ENCODE measurements at regions of chr11 and their contacts with region 1.

Region 1: GRCh38 chr11:85595285-85595884 is 31.8 kb downstream of the DLG2 start:
- DNase-seq: peak in 7 of 9 donors; percentile 19 to 65 (median 49)
- ATAC-seq: peak; percentile 73
- H3K4me3 ChIP-seq: no peak overlapping the region
- H3K4me3 Mint-ChIP-seq: no peak overlapping the region
- H3K27ac ChIP-seq: no peak overlapping the region
- H3K27ac Mint-ChIP-seq: no peak overlapping the region
- H3K4me1 ChIP-seq: no peaks in the 10 kb centered on the region
- H3K4me1 Mint-ChIP-seq: no peaks in the 10 kb centered on the region
- H3K27me3 ChIP-seq: no peaks in the 10 kb centered on the region
- H3K27me3 Mint-ChIP-seq: peaks cover 0 to 19% (median 0%) of the 10 kb centered on the region in 5 donors

Region 2: DNA sequence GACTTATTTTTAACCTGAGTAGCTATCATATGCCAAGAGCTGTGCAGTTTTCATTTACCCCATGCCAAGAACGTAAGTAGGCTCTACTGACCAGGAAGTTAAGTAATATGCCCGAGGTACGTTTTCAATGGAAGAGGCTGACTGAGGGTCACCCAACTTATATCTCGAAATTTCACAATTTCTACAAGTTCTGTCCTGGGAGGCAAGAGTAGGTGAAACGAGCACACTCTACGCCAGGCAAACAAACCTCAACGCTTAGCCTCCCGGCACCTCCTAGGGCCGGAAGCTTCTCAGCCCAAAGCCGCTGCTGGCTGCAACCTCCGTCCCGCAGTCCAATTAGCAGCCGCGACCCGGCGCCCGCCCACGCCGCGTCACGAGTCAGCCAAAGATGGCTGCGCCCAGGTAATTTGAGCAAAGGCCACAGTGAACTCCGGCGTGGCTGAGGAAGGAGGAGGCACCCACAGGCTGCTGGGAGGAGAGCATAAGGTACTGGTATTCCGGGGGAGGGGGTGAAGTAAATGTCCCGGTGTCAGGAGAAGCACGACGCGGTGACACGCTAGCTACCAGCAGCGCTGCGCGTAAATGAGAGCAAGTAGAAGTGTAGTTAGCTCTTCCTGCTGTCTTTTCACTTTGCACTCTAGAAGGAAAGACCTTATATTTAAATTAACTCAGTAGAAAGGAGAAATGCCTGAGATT is 52.4 kb after region 1 on chr11 and contains the start of gene TMEM126A:
- CTCF ChIA-PET with region 1: no interaction called
- POLR2A ChIA-PET with region 1: no interaction called
- intact Hi-C with region 1: loop called in 1 of 2 experiments (anchors 1 kb)
- DNase-seq: peak; percentile 85 to 92 (median 90)
- ATAC-seq: peak; percentile 99
- H3K4me3 ChIP-seq: peak within 1 kb of the TSS; percentile 83
- H3K4me3 Mint-ChIP-seq: peak within 1 kb of the TSS; percentile 92 to 100 (median 98)
- H3K27ac ChIP-seq: peak within 1 kb of the TSS; percentile 87
- H3K27ac Mint-ChIP-seq: peak within 1 kb of the TSS; percentile 86 to 99 (median 98)
- H3K4me1 ChIP-seq: peaks cover 11 to 14% of the 10 kb centered on the region in 2 donors
- H3K4me1 Mint-ChIP-seq: peaks cover 9 to 48% (median 38%) of the 10 kb centered on the region in 7 donors
- H3K27me3 ChIP-seq: no peaks in the 10 kb centered on the region
- H3K27me3 Mint-ChIP-seq: peaks cover 12 to 29% (median 22%) of the 10 kb centered on the region in 5 donors
- total RNA-seq, gene TMEM126A: 17.8 to 40.8 (median 18.9) TPM

Region 3: GRCh38 chr11:85718991-85719807 is 123.8 kb after region 1 on chr11:
- CTCF ChIA-PET with region 1: no interaction called
- POLR2A ChIA-PET with region 1: no interaction called
- intact Hi-C with region 1: no loop called
- DNase-seq: no peak
- ATAC-seq: no peak
- H3K4me3 ChIP-seq: no peak overlapping the region
- H3K4me3 Mint-ChIP-seq: no peak overlapping the region
- H3K27ac ChIP-seq: no peak overlapping the region
- H3K27ac Mint-ChIP-seq: peak overlapping the region in 1 of 9 donors; percentile 84
- H3K4me1 ChIP-seq: no peaks in the 10 kb centered on the region
- H3K4me1 Mint-ChIP-seq: peaks cover 0 to 4% (median 0%) of the 10 kb centered on the region in 7 donors
- H3K27me3 ChIP-seq: no peaks in the 10 kb centered on the region
- H3K27me3 Mint-ChIP-seq: peaks cover 0 to 2% (median 0%) of the 10 kb centered on the region in 5 donors

Region 4: DNA sequence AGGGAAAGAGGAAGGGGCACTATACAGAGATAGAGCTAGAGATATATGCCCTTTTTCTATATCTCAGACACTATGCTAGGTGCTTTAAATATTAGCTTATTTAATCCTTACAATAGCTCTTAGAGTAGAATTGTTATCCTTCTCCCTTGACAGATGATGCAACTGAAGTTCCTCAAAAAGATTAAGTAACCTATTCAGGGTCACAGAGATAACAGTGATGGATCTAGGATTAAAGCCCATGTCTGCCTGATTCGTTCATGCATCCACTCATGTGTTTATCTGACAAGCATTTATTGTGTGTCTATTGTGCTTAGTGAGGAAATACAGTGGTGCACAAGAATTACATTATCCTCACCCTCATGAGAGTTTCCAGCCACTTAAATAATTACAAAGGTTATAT is 268.5 kb after region 1 on chr11:
- CTCF ChIA-PET with region 1: no interaction called
- POLR2A ChIA-PET with region 1: no interaction called
- intact Hi-C with region 1: loop called in 1 of 2 experiments (anchors 2 kb)
- DNase-seq: no peak
- ATAC-seq: no peak
- H3K4me3 ChIP-seq: no peak overlapping the region
- H3K4me3 Mint-ChIP-seq: no peak overlapping the region
- H3K27ac ChIP-seq: no peak overlapping the region
- H3K27ac Mint-ChIP-seq: no peak overlapping the region
- H3K4me1 ChIP-seq: no peaks in the 10 kb centered on the region
- H3K4me1 Mint-ChIP-seq: no peaks in the 10 kb centered on the region
- H3K27me3 ChIP-seq: no peaks in the 10 kb centered on the region
- H3K27me3 Mint-ChIP-seq: peaks cover 0 to 41% (median 0%) of the 10 kb centered on the region in 5 donors

Region 5: DNA sequence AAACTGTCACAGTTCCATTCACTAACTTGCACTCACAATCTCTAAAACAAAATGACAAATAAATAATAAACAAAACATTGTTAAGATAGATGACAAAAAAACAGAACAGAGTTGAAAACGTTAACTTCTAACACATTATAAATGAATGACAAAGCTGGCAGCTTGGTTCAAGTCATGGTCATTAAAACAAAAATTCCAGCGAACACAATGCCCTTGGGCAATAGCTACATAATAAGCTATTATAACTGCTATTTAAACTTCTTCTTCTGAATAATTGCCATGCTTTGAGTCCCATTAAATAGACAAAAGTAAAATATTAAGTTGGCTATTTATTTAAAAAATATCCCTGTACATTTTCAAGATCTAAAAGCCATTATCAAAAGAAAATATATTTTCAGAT is 418.8 kb after region 1 on chr11:
- CTCF ChIA-PET with region 1: no interaction called
- POLR2A ChIA-PET with region 1: no interaction called
- intact Hi-C with region 1: loop called in 1 of 2 experiments (anchors 10 kb)
- DNase-seq: no peak
- ATAC-seq: no peak
- H3K4me3 ChIP-seq: no peak overlapping the region
- H3K4me3 Mint-ChIP-seq: no peak overlapping the region
- H3K27ac ChIP-seq: no peak overlapping the region
- H3K27ac Mint-ChIP-seq: peak overlapping the region in 1 of 9 donors; percentile 43
- H3K4me1 ChIP-seq: peaks cover 0 to 4% of the 10 kb centered on the region in 2 donors
- H3K4me1 Mint-ChIP-seq: peaks cover 8 to 20% (median 15%) of the 10 kb centered on the region in 7 donors
- H3K27me3 ChIP-seq: no peaks in the 10 kb centered on the region
- H3K27me3 Mint-ChIP-seq: no peaks in the 10 kb centered on the region

Region 6: GRCh38 chr11:86218125-86219084 is 623.0 kb after region 1 on chr11:
- CTCF ChIA-PET with region 1: no interaction called
- POLR2A ChIA-PET with region 1: no interaction called
- intact Hi-C with region 1: loop called in 1 of 2 experiments (anchors 1 kb)
- DNase-seq: peak in 8 of 9 donors; percentile 17 to 54 (median 42)
- ATAC-seq: peak; percentile 92
- H3K4me3 ChIP-seq: peak overlapping the region; percentile 32
- H3K4me3 Mint-ChIP-seq: peak overlapping the region; percentile 32 to 79 (median 67)
- H3K27ac ChIP-seq: no peak overlapping the region
- H3K27ac Mint-ChIP-seq: peak overlapping the region in 2 of 9 donors; percentile 44 to 45
- H3K4me1 ChIP-seq: no peaks in the 10 kb centered on the region
- H3K4me1 Mint-ChIP-seq: peaks cover 4 to 42% (median 12%) of the 10 kb centered on the region in 7 donors
- H3K27me3 ChIP-seq: no peaks in the 10 kb centered on the region
- H3K27me3 Mint-ChIP-seq: peaks cover 0 to 12% (median 5%) of the 10 kb centered on the region in 5 donors

Region 7: DNA sequence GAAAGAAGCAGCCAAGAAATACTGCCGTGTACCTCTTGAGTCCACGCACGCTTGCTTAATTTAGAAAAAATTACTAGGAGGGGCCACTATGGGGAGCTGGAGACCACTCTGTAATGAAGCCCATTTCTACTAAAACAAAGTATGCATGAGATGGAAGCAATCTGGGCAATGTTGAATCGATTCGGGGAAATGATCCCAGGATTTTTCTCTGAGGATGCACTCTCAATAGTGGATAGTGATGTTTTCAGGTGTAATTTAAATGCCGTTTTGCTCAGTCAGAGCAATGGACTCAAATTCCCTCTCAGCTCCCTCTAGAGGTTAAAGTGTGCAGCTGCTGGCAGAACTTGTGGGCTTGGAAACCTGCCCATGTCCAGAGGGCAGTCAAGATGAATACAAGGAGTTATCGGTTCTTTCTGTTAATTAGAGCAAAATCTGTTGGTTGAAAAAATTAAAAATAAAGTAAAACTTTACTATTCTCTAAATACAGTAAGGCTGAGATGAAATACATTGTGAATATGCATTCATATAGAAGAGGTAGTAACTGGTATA is 1012.9 kb after region 1 on chr11:
- CTCF ChIA-PET with region 1: no interaction called
- POLR2A ChIA-PET with region 1: no interaction called
- intact Hi-C with region 1: loop called in 1 of 2 experiments (anchors 2 kb)
- DNase-seq: peak in 2 of 9 donors; percentile 7 to 36
- ATAC-seq: peak; percentile 78
- H3K4me3 ChIP-seq: no peak overlapping the region
- H3K4me3 Mint-ChIP-seq: peak overlapping the region in 1 of 10 donors; percentile 16
- H3K27ac ChIP-seq: no peak overlapping the region
- H3K27ac Mint-ChIP-seq: no peak overlapping the region
- H3K4me1 ChIP-seq: no peaks in the 10 kb centered on the region
- H3K4me1 Mint-ChIP-seq: peaks cover 0 to 14% (median 7%) of the 10 kb centered on the region in 7 donors
- H3K27me3 ChIP-seq: no peaks in the 10 kb centered on the region
- H3K27me3 Mint-ChIP-seq: peaks cover 0 to 4% (median 0%) of the 10 kb centered on the region in 5 donors